ENCODE measurements at regions of chr2 and their contacts with region 1.

Region 1: DNA sequence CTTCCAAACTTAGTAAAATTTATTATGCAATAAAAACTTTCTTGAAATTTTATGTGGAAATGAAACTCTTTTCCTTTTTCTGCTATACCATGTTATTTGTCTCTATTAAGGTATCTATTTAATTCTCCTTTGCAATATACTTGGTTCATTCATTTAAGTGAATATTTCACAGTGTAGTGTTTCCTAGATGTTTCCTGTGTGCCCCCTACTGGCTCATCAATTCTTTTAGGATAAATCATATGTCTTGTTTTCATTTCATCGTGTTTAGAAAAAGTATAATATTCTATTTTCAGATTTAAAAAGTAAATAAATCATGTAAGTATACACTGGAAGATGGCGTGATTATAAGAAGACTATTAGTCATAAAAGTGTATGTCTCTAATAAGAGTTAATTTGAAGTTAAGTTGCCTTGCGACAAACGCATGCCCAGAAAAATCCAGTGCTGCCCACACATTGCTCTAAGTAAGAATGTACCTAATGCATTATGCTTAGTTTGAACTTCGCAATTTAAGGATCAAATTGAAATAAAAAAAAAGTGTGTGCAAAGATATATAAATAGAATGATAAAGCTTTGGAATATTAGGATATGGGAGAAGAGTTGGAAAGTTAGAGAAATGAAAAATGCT is 525.4 kb downstream of the KCNJ3 start:
- DNase-seq: peak; percentile 39
- H3K4me3 ChIP-seq: no peak overlapping the region
- H3K27ac ChIP-seq: no peak overlapping the region
- H3K4me1 ChIP-seq: no peaks in the 10 kb centered on the region
- H3K27me3 ChIP-seq: no peaks in the 10 kb centered on the region
- CTCF ChIP-seq: peak; percentile 64

Region 2: GRCh38 chr2:154402218-154402617 is 821.7 kb before region 1 on chr2:
- CTCF ChIA-PET with region 1: no interaction called
- POLR2A ChIA-PET with region 1: no interaction called
- intact Hi-C with region 1: loop called (anchors 5 kb)
- DNase-seq: peak; percentile 74
- H3K4me3 ChIP-seq: no peak overlapping the region
- H3K27ac ChIP-seq: no peak overlapping the region
- H3K4me1 ChIP-seq: no peaks in the 10 kb centered on the region
- H3K27me3 ChIP-seq: no peaks in the 10 kb centered on the region
- CTCF ChIP-seq: peak; percentile 67

Region 3: DNA sequence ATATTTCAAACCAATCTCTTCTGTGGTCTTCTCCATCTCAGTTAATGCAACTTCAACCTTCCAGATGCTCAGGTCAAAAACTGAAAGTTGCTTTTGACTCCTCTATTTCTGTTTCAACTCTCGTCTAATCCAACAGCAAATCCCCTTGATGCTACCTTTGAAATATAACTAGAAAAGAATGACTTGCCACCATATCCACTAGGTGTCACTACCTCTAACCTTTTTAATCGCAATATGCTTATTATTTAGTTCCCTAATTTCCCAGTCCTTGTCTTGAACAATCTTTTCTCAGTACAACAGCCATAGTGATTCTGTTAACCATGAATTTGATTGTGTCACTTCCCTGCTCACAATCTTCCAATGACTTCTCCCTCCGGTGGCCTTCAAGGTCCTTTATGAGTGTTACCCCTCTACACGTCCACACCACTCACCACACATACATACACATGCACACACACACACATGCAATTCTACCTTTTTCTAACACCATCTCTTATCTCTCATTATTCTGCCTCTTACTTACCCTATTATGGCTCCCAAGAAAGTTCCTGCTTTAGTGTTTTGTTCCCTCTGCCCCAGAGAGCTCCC is 770.9 kb before region 1 on chr2:
- CTCF ChIA-PET with region 1: no interaction called
- POLR2A ChIA-PET with region 1: no interaction called
- intact Hi-C with region 1: loop called (anchors 5 kb)
- DNase-seq: peak; percentile 57
- H3K4me3 ChIP-seq: no peak overlapping the region
- H3K27ac ChIP-seq: no peak overlapping the region
- H3K4me1 ChIP-seq: no peaks in the 10 kb centered on the region
- H3K27me3 ChIP-seq: no peaks in the 10 kb centered on the region
- CTCF ChIP-seq: peak; percentile 64

Region 4: GRCh38 chr2:155802888-155803287 is 579.0 kb after region 1 on chr2:
- CTCF ChIA-PET with region 1: no interaction called
- POLR2A ChIA-PET with region 1: no interaction called
- intact Hi-C with region 1: no loop called
- DNase-seq: no peak
- H3K4me3 ChIP-seq: no peak overlapping the region
- H3K27ac ChIP-seq: no peak overlapping the region
- H3K4me1 ChIP-seq: no peaks in the 10 kb centered on the region
- H3K27me3 ChIP-seq: no peaks in the 10 kb centered on the region
- CTCF ChIP-seq: no peak

Measured in A673 (cell line).